Naive thymus-derived CD4-positive, alpha-beta T cell (primary cell): ENCODE measurements at regions of chr6 and their contacts with region 1.

Region 1: GRCh38 chr6:158290659-158291058 is 21.6 kb upstream of the TULP4 start:
- DNase-seq: peak in 8 of 9 donors; percentile 20 to 63 (median 52)
- ATAC-seq: peak; percentile 96
- H3K4me3 ChIP-seq: peak overlapping the region; percentile 33
- H3K4me3 Mint-ChIP-seq: peak overlapping the region; percentile 61 to 93 (median 83)
- H3K27ac ChIP-seq: peak overlapping the region; percentile 23
- H3K27ac Mint-ChIP-seq: peak overlapping the region; percentile 28 to 95 (median 86)
- H3K4me1 ChIP-seq: peaks cover 10 to 33% of the 10 kb centered on the region in 2 donors
- H3K4me1 Mint-ChIP-seq: peaks cover 25 to 64% (median 47%) of the 10 kb centered on the region in 7 donors
- H3K27me3 ChIP-seq: no peaks in the 10 kb centered on the region
- H3K27me3 Mint-ChIP-seq: no peaks in the 10 kb centered on the region

Region 2: DNA sequence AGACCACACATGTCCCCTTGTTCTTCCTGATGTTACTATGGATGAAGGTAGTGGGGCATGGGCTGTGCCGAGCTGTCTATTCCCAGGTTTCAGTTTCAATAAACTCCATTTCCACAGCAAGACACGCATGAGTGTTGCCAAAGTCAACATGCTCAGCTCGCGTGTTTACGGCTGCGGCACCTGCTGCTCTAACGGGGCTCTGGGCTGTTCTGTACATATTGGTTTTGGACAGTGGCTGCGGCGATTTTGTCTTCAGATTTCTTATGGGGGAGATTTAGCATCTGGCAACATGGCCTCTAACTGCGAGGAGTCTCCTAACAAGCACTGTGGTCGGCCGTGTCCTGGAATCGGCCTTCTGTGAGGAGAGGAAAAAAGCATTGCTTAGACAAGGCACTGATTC is 1026.0 kb before region 1 on chr6:
- CTCF ChIA-PET with region 1: no interaction called
- POLR2A ChIA-PET with region 1: no interaction called
- intact Hi-C with region 1: no loop called
- DNase-seq: no peak
- ATAC-seq: no peak
- H3K4me3 ChIP-seq: no peak overlapping the region
- H3K4me3 Mint-ChIP-seq: no peak overlapping the region
- H3K27ac ChIP-seq: no peak overlapping the region
- H3K27ac Mint-ChIP-seq: no peak overlapping the region
- H3K4me1 ChIP-seq: peaks cover 0 to 7% of the 10 kb centered on the region in 2 donors
- H3K4me1 Mint-ChIP-seq: peaks cover 0 to 5% (median 2%) of the 10 kb centered on the region in 7 donors
- H3K27me3 ChIP-seq: no peaks in the 10 kb centered on the region
- H3K27me3 Mint-ChIP-seq: peaks cover 0 to 6% (median 0%) of the 10 kb centered on the region in 5 donors

Region 3: GRCh38 chr6:157974341-157974894 is 316.2 kb before region 1 on chr6:
- CTCF ChIA-PET with region 1: no interaction called
- POLR2A ChIA-PET with region 1: no interaction called
- intact Hi-C with region 1: no loop called
- DNase-seq: no peak
- ATAC-seq: no peak
- H3K4me3 ChIP-seq: no peak overlapping the region
- H3K4me3 Mint-ChIP-seq: no peak overlapping the region
- H3K27ac ChIP-seq: no peak overlapping the region
- H3K27ac Mint-ChIP-seq: peak overlapping the region in 1 of 9 donors; percentile 62
- H3K4me1 ChIP-seq: peaks cover 0 to 2% of the 10 kb centered on the region in 2 donors
- H3K4me1 Mint-ChIP-seq: peaks cover 3 to 14% (median 6%) of the 10 kb centered on the region in 7 donors
- H3K27me3 ChIP-seq: no peaks in the 10 kb centered on the region
- H3K27me3 Mint-ChIP-seq: peaks cover 0 to 14% (median 0%) of the 10 kb centered on the region in 5 donors

Region 4: GRCh38 chr6:158231551-158232315 is 58.9 kb before region 1 on chr6:
- CTCF ChIA-PET with region 1: no interaction called
- POLR2A ChIA-PET with region 1: interaction called, 3 read pairs
- intact Hi-C with region 1: loop called (anchors 1 to 2 kb)
- DNase-seq: peak; percentile 57 to 84 (median 71)
- ATAC-seq: peak; percentile 86
- H3K4me3 ChIP-seq: peak overlapping the region; percentile 62
- H3K4me3 Mint-ChIP-seq: peak overlapping the region; percentile 85 to 96 (median 92)
- H3K27ac ChIP-seq: peak overlapping the region; percentile 77
- H3K27ac Mint-ChIP-seq: peak overlapping the region; percentile 86 to 94 (median 89)
- H3K4me1 ChIP-seq: peaks cover 6 to 18% of the 10 kb centered on the region in 2 donors
- H3K4me1 Mint-ChIP-seq: peaks cover 22 to 44% (median 38%) of the 10 kb centered on the region in 7 donors
- H3K27me3 ChIP-seq: no peaks in the 10 kb centered on the region
- H3K27me3 Mint-ChIP-seq: peaks cover 0 to 14% (median 0%) of the 10 kb centered on the region in 5 donors

Region 5: DNA sequence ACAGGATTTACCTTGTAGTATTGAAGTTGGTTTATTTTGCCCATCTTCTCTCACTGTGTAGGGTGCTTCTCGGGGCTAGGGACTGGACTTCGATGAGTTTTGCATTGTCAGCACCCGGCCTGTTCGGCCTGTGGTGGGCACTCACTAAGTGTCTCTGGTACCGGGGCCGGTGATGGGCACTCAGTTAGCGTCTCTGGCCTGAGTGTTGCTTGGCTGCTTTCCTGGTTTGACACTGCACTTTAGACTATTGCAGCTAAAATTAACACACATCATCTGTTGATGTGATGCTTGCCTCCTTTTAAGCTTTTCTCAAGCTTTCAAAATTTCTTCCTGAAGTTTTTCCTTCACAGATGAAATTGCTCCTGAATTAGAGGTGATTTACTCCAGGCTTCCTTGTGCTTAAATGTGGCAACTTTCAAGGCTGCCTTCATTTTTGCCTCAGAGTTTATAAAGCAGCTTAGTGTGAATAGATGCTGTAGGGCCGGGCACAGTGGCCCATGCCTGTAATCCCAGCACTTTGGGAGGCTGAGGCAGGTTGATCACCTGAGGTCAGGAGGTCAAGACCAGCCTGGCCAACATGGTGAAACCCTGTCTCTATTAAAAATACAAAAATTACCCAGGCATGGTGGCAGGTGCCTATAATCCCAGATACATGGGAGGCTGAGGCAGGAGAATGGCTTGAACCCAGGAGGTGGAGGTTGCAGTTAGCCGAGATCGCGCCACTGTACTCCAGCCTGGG is 20.1 kb before region 1 on chr6:
- CTCF ChIA-PET with region 1: no interaction called
- POLR2A ChIA-PET with region 1: interaction called, 4 read pairs
- intact Hi-C with region 1: loop called in 1 of 2 experiments (anchors 1 kb)
- DNase-seq: no peak
- ATAC-seq: no peak
- H3K4me3 ChIP-seq: no peak overlapping the region
- H3K4me3 Mint-ChIP-seq: peak overlapping the region in 8 of 10 donors; percentile 4 to 66 (median 58)
- H3K27ac ChIP-seq: no peak overlapping the region
- H3K27ac Mint-ChIP-seq: peak overlapping the region; percentile 22 to 87 (median 58)
- H3K4me1 ChIP-seq: peaks cover 16 to 18% of the 10 kb centered on the region in 2 donors
- H3K4me1 Mint-ChIP-seq: peaks cover 12 to 36% (median 33%) of the 10 kb centered on the region in 7 donors
- H3K27me3 ChIP-seq: no peaks in the 10 kb centered on the region
- H3K27me3 Mint-ChIP-seq: no peaks in the 10 kb centered on the region

Region 6: GRCh38 chr6:158357566-158358216 is 67.0 kb after region 1 on chr6:
- CTCF ChIA-PET with region 1: no interaction called
- POLR2A ChIA-PET with region 1: no interaction called
- intact Hi-C with region 1: loop called in 1 of 2 experiments (anchors 5 kb)
- DNase-seq: no peak
- ATAC-seq: no peak
- H3K4me3 ChIP-seq: no peak overlapping the region
- H3K4me3 Mint-ChIP-seq: peak overlapping the region in 4 of 10 donors; percentile 14 to 50 (median 40)
- H3K27ac ChIP-seq: no peak overlapping the region
- H3K27ac Mint-ChIP-seq: peak overlapping the region in 4 of 9 donors; percentile 2 to 54 (median 14)
- H3K4me1 ChIP-seq: peaks cover 8 to 20% of the 10 kb centered on the region in 2 donors
- H3K4me1 Mint-ChIP-seq: peaks cover 32 to 61% (median 52%) of the 10 kb centered on the region in 7 donors
- H3K27me3 ChIP-seq: no peaks in the 10 kb centered on the region
- H3K27me3 Mint-ChIP-seq: no peaks in the 10 kb centered on the region